CD4-positive, alpha-beta memory T cell (primary cell): ENCODE measurements at regions of chr12 and their contacts with region 1.

Region 1: GRCh38 chr12:54853995-54854566 is at the start of gene MUCL1:
- DNase-seq: peak; percentile 67 to 74 (median 69)
- H3K4me3 ChIP-seq: no peak within 1 kb of the TSS
- H3K4me3 Mint-ChIP-seq: no peak within 1 kb of the TSS
- H3K27ac ChIP-seq: no peak within 1 kb of the TSS
- H3K27ac Mint-ChIP-seq: peak within 1 kb of the TSS in 1 of 7 donors; percentile 55
- H3K4me1 ChIP-seq: no peaks in the 10 kb centered on the region
- H3K4me1 Mint-ChIP-seq: no peaks in the 10 kb centered on the region
- H3K27me3 ChIP-seq: no peaks in the 10 kb centered on the region
- H3K27me3 Mint-ChIP-seq: no peaks in the 10 kb centered on the region
- total RNA-seq, gene MUCL1: not detected

Region 2: DNA sequence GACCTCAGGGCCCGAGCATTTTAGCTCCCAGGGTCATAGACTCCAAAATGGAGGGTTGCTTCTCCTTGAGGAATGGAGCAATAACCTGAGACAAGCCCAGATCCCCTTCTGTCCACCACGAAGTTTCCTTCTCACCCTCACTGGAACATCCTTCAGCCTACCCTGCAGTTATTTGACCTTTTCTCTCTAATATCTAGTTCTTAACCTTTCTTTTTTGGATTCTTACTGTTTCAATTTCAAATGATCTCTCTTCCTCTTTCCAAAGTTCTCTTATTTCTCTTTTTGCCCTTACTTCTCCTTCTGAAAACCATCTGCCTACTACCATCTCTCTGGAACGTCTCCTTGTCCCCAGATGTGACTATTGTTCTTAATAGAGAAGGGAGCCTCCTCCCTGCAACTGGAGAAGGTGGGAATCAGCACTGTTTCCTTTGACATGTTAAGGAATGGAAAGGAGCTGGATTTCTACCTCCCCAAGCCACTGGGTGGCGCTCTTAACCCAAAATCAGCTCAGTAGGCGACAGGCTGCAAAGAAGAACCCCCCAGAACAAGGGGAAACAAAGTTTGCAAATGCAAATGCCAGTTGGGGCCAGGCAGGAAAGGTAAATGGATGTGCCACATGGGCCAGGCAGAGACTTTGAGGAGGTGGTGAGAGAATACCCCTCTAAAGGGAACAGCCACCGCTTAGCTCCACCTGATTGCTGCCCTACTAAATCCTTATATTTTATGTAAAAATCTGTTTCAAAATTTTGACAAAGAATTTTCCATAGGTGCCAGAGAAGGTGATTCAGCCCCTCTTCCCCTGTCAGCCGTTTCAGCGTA is 327.1 kb before region 1 on chr12:
- CTCF ChIA-PET with region 1: no interaction called
- POLR2A ChIA-PET with region 1: no interaction called
- intact Hi-C with region 1: no loop called
- DNase-seq: peak in 4 of 5 donors; percentile 11 to 24 (median 14)
- H3K4me3 ChIP-seq: no peak overlapping the region
- H3K4me3 Mint-ChIP-seq: no peak overlapping the region
- H3K27ac ChIP-seq: no peak overlapping the region
- H3K27ac Mint-ChIP-seq: peak overlapping the region in 4 of 7 donors; percentile 2 to 89 (median 32)
- H3K4me1 ChIP-seq: no peaks in the 10 kb centered on the region
- H3K4me1 Mint-ChIP-seq: peaks cover 0 to 3% (median 0%) of the 10 kb centered on the region in 4 donors
- H3K27me3 ChIP-seq: no peaks in the 10 kb centered on the region
- H3K27me3 Mint-ChIP-seq: no peaks in the 10 kb centered on the region

Region 3: GRCh38 chr12:54549774-54550451 is 304.2 kb before region 1 on chr12:
- CTCF ChIA-PET with region 1: no interaction called
- POLR2A ChIA-PET with region 1: no interaction called
- intact Hi-C with region 1: no loop called
- DNase-seq: no peak
- H3K4me3 ChIP-seq: peak overlapping the region in 1 of 2 donors; percentile 30
- H3K4me3 Mint-ChIP-seq: peak overlapping the region; percentile 80 to 95 (median 86)
- H3K27ac ChIP-seq: no peak overlapping the region
- H3K27ac Mint-ChIP-seq: peak overlapping the region in 5 of 7 donors; percentile 40 to 77 (median 49)
- H3K4me1 ChIP-seq: peaks cover 15% of the 10 kb centered on the region
- H3K4me1 Mint-ChIP-seq: peaks cover 7 to 35% (median 17%) of the 10 kb centered on the region in 4 donors
- H3K27me3 ChIP-seq: no peaks in the 10 kb centered on the region
- H3K27me3 Mint-ChIP-seq: peaks cover 0 to 2% of the 10 kb centered on the region in 2 donors

Region 4: GRCh38 chr12:54701940-54702592 is 152.0 kb before region 1 on chr12:
- CTCF ChIA-PET with region 1: interaction called, 4 read pairs
- POLR2A ChIA-PET with region 1: no interaction called
- intact Hi-C with region 1: loop called (anchors 5 kb)
- DNase-seq: peak in 4 of 5 donors; percentile 48 to 55 (median 54)
- H3K4me3 ChIP-seq: no peak overlapping the region
- H3K4me3 Mint-ChIP-seq: no peak overlapping the region
- H3K27ac ChIP-seq: no peak overlapping the region
- H3K27ac Mint-ChIP-seq: no peak overlapping the region
- H3K4me1 ChIP-seq: no peaks in the 10 kb centered on the region
- H3K4me1 Mint-ChIP-seq: no peaks in the 10 kb centered on the region
- H3K27me3 ChIP-seq: no peaks in the 10 kb centered on the region
- H3K27me3 Mint-ChIP-seq: peaks cover 5 to 6% of the 10 kb centered on the region in 2 donors

Region 5: DNA sequence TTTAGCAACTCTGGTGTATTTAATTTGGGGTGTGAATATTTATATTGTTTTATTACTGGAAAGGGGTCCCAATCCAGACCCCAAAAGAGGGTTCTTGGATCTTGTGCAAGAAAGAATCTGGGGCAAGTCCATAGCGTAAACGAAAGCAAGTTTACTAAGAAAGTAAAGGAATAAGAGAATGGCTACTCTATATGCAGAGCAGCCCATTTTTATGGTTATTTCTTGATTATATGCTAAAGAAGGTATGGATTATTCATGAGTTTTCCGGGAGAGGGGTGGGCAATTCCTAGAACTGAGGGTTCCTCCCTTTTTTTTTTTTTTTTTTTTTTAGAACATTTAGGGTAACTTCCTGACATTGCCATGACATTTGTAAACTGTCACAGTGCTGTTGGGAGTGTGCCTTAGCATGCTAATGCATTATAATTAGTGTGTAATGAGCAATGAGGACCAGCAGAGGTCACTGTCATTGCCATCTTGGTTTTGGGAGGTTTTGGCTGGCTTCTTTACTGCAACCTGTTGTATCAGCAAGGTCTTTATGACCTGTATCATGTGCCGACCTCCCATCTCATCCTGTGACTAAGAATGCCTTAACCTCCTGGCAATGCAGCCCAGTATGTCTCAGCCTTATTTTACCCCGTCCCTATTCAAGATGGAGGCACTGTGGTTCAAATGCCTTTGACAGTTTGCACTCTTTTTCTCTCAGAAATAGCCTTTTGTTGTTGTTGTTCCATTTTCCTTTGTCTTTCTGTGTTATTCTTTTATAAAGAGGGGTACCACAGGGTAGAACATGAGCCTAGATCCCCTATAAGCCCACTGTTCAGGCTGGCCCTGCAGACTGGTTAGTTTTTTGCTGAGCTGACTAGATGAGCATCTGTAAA is 130.5 kb before region 1 on chr12:
- CTCF ChIA-PET with region 1: interaction called, 4 read pairs
- POLR2A ChIA-PET with region 1: no interaction called
- intact Hi-C with region 1: loop called (anchors 1 kb)
- DNase-seq: peak; percentile 38 to 54 (median 44)
- H3K4me3 ChIP-seq: no peak overlapping the region
- H3K4me3 Mint-ChIP-seq: no peak overlapping the region
- H3K27ac ChIP-seq: no peak overlapping the region
- H3K27ac Mint-ChIP-seq: no peak overlapping the region
- H3K4me1 ChIP-seq: peaks cover 4% of the 10 kb centered on the region
- H3K4me1 Mint-ChIP-seq: peaks cover 5 to 32% (median 12%) of the 10 kb centered on the region in 4 donors
- H3K27me3 ChIP-seq: no peaks in the 10 kb centered on the region
- H3K27me3 Mint-ChIP-seq: peaks cover 7 to 10% of the 10 kb centered on the region in 2 donors

Region 6: DNA sequence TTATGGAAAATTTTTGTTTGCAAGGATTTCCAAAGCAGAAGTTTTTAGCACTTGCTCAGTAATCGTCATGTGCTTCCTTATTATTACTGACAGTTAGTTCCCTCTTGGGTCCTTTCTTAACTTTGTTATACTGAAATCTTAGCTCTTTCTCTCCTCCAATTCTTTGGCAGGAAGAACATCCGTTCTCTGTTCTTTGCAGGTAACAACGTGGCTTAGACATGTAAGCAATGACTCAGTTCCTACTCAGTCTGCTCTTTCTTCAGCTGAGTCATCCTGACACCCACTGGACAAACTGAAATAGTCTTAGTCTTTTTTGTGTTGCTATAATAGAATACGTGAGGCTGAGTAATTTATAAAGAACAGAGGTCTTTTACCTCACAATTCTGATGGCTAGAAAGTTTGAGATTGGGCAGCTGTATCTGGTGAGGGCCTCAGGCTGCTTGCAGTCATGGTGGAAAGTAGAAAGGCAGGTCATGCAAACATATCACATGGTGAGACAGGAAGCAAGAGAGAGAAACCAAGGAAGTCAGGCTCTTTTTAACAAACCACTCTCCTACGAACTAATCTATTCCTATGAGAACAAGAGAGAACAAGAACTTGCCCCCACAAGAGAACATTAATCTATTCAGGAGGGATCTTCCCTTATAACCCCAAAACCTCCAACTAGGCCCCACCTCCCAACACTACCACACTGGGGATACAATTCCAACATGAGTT is 81.3 kb after region 1 on chr12:
- CTCF ChIA-PET with region 1: interaction called, 32 read pairs
- POLR2A ChIA-PET with region 1: interaction called, 4 read pairs
- intact Hi-C with region 1: loop called (anchors 1 kb)
- DNase-seq: peak; percentile 53 to 71 (median 60)
- H3K4me3 ChIP-seq: no peak overlapping the region
- H3K4me3 Mint-ChIP-seq: peak overlapping the region in 7 of 8 donors; percentile 42 to 85 (median 74)
- H3K27ac ChIP-seq: peak overlapping the region; percentile 35
- H3K27ac Mint-ChIP-seq: peak overlapping the region; percentile 80 to 96 (median 91)
- H3K4me1 ChIP-seq: peaks cover 45% of the 10 kb centered on the region
- H3K4me1 Mint-ChIP-seq: peaks cover 33 to 53% (median 44%) of the 10 kb centered on the region in 4 donors
- H3K27me3 ChIP-seq: no peaks in the 10 kb centered on the region
- H3K27me3 Mint-ChIP-seq: no peaks in the 10 kb centered on the region

Region 7: DNA sequence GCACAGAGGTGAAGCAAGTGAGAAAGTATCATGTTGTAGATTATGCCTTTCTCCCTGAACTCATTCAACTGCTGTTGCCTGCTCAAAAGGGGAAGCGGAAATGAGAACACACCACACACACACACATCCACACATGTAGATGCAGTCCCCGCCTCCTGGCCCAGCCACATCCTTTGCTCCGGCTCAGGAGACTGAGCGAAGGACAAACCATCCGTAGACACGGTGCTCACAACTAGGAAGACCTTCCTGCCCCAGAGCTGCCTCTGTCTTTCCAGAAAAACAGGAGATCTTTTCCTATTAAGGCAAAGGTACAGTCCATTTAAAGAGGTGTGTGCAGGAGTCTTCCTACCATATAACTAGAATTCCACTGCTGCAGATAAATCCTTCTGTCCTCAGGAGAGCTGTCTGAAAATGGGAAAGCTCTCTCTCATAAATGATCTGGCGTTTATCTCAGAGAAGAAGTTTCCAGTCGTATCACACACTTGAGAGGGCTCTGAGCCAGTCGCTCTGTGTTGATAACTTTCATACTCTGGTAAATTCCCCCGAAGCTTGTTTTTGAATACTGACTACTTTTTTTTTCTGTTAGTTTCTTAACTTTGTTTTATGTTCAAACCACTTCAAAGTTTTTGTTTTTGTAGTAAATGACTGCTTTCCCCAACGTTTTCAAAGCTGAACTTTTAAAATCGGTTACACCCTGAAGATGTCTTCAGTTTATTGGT is 130.7 kb after region 1 on chr12 and contains the start of gene TESPA1:
- CTCF ChIA-PET with region 1: no interaction called
- POLR2A ChIA-PET with region 1: interaction called, 4 read pairs
- intact Hi-C with region 1: loop called (anchors 1 kb)
- DNase-seq: peak; percentile 86 to 94 (median 90)
- H3K4me3 ChIP-seq: peak within 1 kb of the TSS; percentile 66 to 86
- H3K4me3 Mint-ChIP-seq: peak within 1 kb of the TSS; percentile 89 to 99 (median 95)
- H3K27ac ChIP-seq: peak within 1 kb of the TSS; percentile 92
- H3K27ac Mint-ChIP-seq: peak within 1 kb of the TSS; percentile 97 to 100 (median 98)
- H3K4me1 ChIP-seq: peaks cover 71% of the 10 kb centered on the region
- H3K4me1 Mint-ChIP-seq: peaks cover 53 to 97% (median 64%) of the 10 kb centered on the region in 4 donors
- H3K27me3 ChIP-seq: no peaks in the 10 kb centered on the region
- H3K27me3 Mint-ChIP-seq: no peaks in the 10 kb centered on the region
- total RNA-seq, gene TESPA1: 269 to 287 TPM

Region 8: GRCh38 chr12:55246159-55246558 is 392.1 kb after region 1 on chr12:
- CTCF ChIA-PET with region 1: no interaction called
- POLR2A ChIA-PET with region 1: no interaction called
- intact Hi-C with region 1: no loop called
- DNase-seq: no peak
- H3K4me3 ChIP-seq: no peak overlapping the region
- H3K4me3 Mint-ChIP-seq: no peak overlapping the region
- H3K27ac ChIP-seq: no peak overlapping the region
- H3K27ac Mint-ChIP-seq: no peak overlapping the region
- H3K4me1 ChIP-seq: no peaks in the 10 kb centered on the region
- H3K4me1 Mint-ChIP-seq: no peaks in the 10 kb centered on the region
- H3K27me3 ChIP-seq: no peaks in the 10 kb centered on the region
- H3K27me3 Mint-ChIP-seq: peaks cover 9 to 15% of the 10 kb centered on the region in 2 donors